WTC11 (cell line): ENCODE measurements at regions of chr19 and their contacts with region 1.

Region 1: GRCh38 chr19:46192992-46193650 is 36.4 kb upstream of the IGFL1 start:
- DNase-seq: no peak
- ATAC-seq: no peak
- H3K4me3 Mint-ChIP-seq: no peak overlapping the region
- H3K27ac Mint-ChIP-seq: no peak overlapping the region
- H3K4me1 Mint-ChIP-seq: no peaks in the 10 kb centered on the region
- H3K27me3 Mint-ChIP-seq: peaks cover 2% of the 10 kb centered on the region; the same call in 1 of the 2 replicates
- CTCF ChIP-seq: no peak

Region 2: DNA sequence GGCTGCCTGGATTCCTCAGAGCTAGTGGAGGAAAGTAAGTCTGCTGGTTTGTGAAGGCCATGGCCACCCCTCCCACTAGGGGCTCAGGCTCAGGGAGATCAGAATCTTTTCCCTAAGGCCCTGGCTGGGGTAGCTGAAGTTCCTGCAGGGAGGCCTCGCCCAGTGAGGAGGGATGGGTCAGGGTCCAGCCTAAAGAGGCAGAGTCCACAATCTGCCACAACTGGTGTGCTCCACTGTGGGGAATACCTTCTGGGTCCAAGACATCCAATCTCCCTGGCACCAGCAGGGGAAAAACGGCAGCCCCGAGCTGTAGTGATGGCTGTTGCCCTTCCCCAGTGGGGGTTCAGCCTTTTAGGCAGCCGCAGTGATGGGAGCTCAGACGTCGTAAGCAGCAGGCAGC is 91.8 kb before region 1 on chr19:
- CTCF ChIA-PET with region 1: interaction called, 12 read pairs
- POLR2A ChIA-PET with region 1: no interaction called
- DNase-seq: peak; percentile 18
- ATAC-seq: peak; percentile 47
- H3K4me3 Mint-ChIP-seq: no peak overlapping the region
- H3K27ac Mint-ChIP-seq: no peak overlapping the region
- H3K4me1 Mint-ChIP-seq: peaks cover 11% of the 10 kb centered on the region
- H3K27me3 Mint-ChIP-seq: peaks cover 20% of the 10 kb centered on the region
- CTCF ChIP-seq: no peak

Region 3: GRCh38 chr19:46218160-46218559 is 25.0 kb after region 1 on chr19:
- CTCF ChIA-PET with region 1: interaction called, 13 read pairs
- POLR2A ChIA-PET with region 1: no interaction called
- DNase-seq: peak; percentile 81
- ATAC-seq: peak; percentile 61
- H3K4me3 Mint-ChIP-seq: no peak overlapping the region
- H3K27ac Mint-ChIP-seq: no peak overlapping the region
- H3K4me1 Mint-ChIP-seq: peaks cover 3% of the 10 kb centered on the region
- H3K27me3 Mint-ChIP-seq: peaks cover 11% of the 10 kb centered on the region
- CTCF ChIP-seq: no peak

Region 4: DNA sequence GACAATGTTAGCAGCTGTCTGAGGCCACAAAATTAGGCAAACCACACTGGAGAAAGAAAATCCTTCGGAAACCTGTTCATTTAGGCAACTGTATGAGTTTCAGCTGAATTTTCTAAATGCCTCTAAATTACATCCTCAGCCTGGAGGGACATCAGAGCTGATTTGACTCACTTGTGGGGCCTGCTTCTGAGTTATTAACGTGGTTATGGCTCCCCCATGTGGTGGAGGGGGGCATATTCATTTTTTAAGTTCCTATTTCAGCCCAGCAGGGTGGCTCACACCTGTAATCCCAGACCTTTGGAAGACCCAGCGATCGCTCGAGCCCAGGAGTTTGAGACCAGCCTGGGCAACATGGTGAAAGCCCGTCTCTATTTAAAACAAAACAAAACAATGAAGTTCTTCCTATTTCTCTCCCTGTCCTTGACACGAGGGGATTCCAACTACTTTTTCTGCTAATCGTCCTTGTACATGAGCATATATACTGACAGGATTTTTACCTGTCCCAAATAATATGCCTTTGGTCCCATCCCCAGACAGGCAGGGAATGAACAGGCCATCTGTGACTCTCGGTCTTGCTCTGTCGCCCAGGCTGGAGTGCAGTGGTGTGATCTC is 72.2 kb after region 1 on chr19:
- CTCF ChIA-PET with region 1: interaction called, 18 read pairs
- POLR2A ChIA-PET with region 1: no interaction called
- DNase-seq: peak; percentile 76
- ATAC-seq: peak; percentile 92
- H3K4me3 Mint-ChIP-seq: no peak overlapping the region
- H3K27ac Mint-ChIP-seq: no peak overlapping the region
- H3K4me1 Mint-ChIP-seq: peaks cover 10% of the 10 kb centered on the region
- H3K27me3 Mint-ChIP-seq: no peaks in the 10 kb centered on the region; the same call in 1 of the 2 replicates
- CTCF ChIP-seq: peak; percentile 86